Dendritic cell treated with granulocyte-macrophage colony-stimulating factor and Interleukin-4, amounts not matched to agents 40 ng/mL and 50 ng/mL, for 4 days (primary cell): ENCODE measurements at regions of chr6 and their contacts with region 1.

Region 1: GRCh38 chr6:106085984-106086813 is at the start of gene PRDM1:
- H3K4me3 Mint-ChIP-seq: peak within 1 kb of the TSS; percentile 88
- H3K27ac Mint-ChIP-seq: peak within 1 kb of the TSS; percentile 99
- H3K4me1 Mint-ChIP-seq: peaks cover 78% of the 10 kb centered on the region
- H3K27me3 Mint-ChIP-seq: peaks cover 3% of the 10 kb centered on the region

Region 2: DNA sequence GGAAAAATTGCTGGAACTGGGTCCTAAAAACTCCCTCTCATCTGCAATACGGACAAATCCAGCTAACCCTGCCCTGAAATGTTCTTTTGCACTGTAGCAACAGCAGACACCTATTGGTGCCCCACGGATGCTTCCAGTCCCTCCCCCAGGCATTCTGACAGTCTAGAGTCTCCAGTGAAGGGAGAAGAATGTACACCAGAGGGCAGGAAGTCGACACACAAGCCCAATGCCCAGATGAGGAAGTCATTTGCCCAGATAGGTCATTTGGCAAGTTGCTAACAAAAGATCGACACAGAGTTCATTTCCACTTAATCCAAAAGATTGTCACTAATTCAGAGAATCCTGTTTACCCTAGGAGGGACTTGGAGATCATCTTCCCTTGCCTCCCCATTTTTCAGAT is 293.1 kb before region 1 on chr6:
- intact Hi-C with region 1: loop called (anchors 2 kb)
- H3K4me3 Mint-ChIP-seq: no peak overlapping the region
- H3K27ac Mint-ChIP-seq: peak overlapping the region; percentile 51
- H3K4me1 Mint-ChIP-seq: peaks cover 57% of the 10 kb centered on the region
- H3K27me3 Mint-ChIP-seq: no peaks in the 10 kb centered on the region

Region 3: DNA sequence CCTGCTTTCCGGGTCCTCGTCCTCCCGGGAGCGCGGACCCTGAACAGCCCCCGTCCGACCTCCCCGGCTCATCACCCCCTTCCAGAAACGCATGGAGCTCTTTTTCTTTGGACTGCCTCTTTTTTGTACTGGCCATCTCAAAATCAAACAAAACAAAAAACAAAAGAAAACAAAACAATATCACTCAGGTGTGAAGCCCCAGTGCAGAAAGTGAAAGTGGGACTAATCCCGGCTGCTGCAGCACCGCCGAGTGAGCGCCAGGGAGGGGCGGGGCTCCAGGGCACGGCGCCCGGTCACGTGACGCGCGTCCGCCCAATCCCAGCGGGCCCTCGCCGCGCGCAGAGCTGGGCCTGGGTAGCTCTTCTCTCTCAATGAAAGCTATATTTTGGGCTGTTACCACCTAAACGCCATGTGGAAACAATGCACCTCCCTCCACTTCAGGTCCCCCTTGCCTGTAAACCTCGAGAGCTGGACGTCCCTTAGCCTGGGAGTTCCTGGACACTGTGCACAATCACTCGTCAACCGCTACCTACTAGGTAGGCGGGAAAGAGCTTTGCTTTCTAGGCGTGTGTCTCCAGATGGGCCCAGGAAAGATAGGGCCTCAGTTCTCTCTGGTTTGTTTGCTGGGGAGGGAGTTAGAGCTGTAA is 93.8 kb before region 1 on chr6:
- intact Hi-C with region 1: loop called (anchors 2 kb)
- H3K4me3 Mint-ChIP-seq: peak overlapping the region; percentile 93
- H3K27ac Mint-ChIP-seq: peak overlapping the region; percentile 93
- H3K4me1 Mint-ChIP-seq: peaks cover 51% of the 10 kb centered on the region
- H3K27me3 Mint-ChIP-seq: peaks cover 15% of the 10 kb centered on the region

Region 4: DNA sequence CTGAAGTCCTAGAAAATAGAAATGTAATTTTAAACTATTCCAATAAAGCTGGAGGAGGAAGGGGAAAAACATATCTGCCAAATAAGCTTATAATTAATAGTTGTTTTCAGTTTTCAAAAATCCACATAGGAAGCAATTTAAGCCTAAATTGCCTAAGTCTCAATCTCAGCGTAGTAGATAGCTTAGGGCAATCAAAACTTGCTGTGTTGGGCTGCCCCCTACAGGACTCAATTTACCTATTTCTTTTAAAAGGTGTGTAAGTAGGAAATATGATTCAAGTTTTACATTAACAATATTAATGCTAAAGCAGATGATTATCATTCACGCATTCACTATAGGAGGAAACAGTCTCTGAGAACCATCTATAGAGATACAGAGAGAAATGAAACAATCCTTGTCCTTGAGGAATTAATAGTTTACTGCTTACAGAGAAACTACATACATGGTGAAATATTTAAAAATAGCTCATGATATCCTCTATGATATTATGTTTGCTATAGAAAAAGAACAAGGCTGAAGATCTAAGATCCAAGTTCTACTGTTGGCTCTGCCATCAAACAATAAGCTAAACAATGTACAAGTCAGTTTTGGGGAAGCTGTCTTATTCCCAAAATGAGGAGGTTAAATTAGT is 137.2 kb after region 1 on chr6:
- intact Hi-C with region 1: loop called (anchors 5 kb)
- H3K4me3 Mint-ChIP-seq: no peak overlapping the region
- H3K27ac Mint-ChIP-seq: no peak overlapping the region
- H3K4me1 Mint-ChIP-seq: peaks cover 24% of the 10 kb centered on the region
- H3K27me3 Mint-ChIP-seq: no peaks in the 10 kb centered on the region